ENCODE measurements at regions of chr17 and their contacts with region 1.

Region 1: GRCh38 chr17:35214631-35215273 is 20.6 kb upstream of the SLC35G3 start:
- DNase-seq: peak; percentile 41
- H3K4me3 Mint-ChIP-seq: peak overlapping the region; percentile 67
- H3K27ac Mint-ChIP-seq: peak overlapping the region; percentile 95
- H3K4me1 Mint-ChIP-seq: peaks cover 79% of the 10 kb centered on the region
- H3K27me3 Mint-ChIP-seq: no peaks in the 10 kb centered on the region

Region 2: DNA sequence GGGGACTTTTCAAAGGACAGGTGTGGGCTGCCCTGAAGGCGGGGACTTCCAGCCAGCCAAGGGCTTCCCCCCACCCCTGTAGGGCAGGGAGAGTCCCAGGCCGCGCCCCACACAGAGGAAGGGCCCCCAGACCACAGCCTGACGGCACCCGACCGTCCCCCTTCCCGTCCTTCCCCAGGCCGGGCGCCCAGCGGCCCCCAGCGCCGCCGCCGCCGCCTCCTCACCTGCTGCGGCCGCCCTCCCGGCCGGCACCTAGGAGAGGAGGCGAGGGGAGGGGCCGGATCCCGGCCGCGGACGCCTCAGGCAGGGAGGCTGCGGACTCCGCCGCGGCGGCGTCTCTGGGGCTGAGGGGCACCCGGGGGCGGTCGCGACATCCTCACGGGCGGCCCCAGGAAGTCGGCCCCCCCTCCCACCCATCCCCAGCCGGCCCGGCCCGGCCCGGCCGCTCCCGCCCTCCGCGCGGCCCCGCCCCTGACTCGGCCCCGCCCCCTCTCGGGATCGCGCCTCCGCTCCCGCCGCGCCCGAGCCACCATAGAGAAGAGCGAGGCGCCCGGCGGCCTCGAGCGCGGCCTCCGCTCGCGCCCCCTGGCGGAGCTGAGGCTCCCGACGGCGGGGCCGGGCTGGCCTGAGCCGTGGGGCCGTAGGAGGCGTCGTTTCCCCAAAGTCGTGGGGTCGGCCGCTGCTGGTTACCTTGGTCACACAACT is 125.7 kb before region 1 on chr17:
- intact Hi-C with region 1: loop called (anchors 10 kb)
- DNase-seq: peak; percentile 84
- H3K4me3 Mint-ChIP-seq: peak overlapping the region; percentile 88
- H3K27ac Mint-ChIP-seq: peak overlapping the region; percentile 92
- H3K4me1 Mint-ChIP-seq: peaks cover 41% of the 10 kb centered on the region
- H3K27me3 Mint-ChIP-seq: no peaks in the 10 kb centered on the region

Region 3: DNA sequence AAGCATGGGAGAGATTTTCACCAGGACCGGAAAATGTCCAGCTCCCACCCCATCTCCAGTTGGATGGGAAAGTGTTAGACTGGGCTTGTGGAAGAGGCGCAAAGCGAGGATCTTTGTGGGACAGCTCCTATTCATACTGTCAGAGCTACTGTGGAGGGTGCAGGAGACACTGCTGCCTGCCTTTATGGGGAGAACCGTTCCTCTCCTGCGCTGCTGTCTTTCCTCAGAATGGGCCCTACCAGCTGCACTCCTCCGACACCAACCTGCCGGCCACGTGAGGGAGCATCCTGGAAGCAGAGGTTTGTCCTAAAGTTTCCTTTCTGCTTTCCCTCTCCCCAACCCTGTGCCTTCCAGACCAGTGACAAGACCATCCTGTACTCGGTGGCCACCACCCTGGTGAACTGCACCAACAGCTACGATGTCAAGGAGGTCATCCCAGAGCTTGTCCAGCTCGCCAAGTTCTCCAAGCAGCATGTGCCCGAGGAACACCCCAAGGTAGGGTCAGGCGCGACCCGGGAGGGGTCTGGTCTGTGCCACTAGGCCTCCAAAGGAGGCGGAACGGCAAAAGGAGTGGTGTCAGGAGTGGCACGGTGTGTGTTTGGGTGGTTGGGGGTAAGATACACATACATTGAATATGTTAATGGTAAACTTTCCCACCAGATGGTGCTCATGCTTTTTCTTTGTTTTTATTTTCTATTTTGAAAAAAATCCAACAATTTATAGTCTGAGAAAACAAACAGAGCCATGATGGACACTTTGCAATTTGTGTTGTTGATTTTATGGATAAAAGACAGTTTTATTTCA is 43.6 kb before region 1 on chr17:
- intact Hi-C with region 1: loop called (anchors 5 kb)
- DNase-seq: no peak
- H3K4me3 Mint-ChIP-seq: no peak overlapping the region
- H3K27ac Mint-ChIP-seq: no peak overlapping the region
- H3K4me1 Mint-ChIP-seq: peaks cover 28% of the 10 kb centered on the region
- H3K27me3 Mint-ChIP-seq: no peaks in the 10 kb centered on the region

Region 4: DNA sequence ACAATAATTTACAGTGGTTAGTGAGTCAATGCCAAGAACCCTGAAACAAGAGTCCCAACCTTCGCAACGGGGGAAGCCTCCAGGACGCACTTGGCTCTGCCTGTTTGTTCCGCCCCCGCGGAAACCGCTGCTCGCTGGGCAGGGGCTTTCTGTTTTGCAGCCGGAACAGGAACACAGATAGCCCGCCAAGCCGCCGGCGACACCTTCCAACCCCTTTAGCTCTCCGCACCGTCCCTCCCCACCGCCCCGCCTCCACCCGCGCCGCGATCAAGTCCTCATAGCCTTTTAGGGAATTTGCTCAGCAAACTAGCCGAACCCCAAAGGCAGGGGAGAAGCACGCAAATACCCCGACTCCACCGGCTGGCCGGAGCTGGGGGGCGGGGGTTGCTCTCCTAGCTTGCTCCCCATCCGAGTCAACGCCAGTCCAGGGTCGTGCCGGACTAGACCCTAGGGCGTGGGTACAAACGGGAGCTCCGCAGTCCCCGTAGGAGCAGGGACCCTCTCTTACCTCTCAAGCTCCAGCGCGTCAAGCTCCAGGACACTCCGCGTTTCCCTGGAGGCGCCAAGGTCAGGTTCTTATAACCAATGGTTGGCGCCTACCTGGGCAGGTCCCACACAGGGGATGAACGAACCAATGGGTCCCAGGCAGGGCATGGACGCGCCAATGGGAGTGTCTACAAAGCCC is 233.6 kb after region 1 on chr17 and contains the start of gene SLFN13:
- intact Hi-C with region 1: loop called (anchors 5 kb)
- DNase-seq: peak; percentile 83
- H3K4me3 Mint-ChIP-seq: peak within 1 kb of the TSS; percentile 65
- H3K27ac Mint-ChIP-seq: peak within 1 kb of the TSS; percentile 79
- H3K4me1 Mint-ChIP-seq: peaks cover 16% of the 10 kb centered on the region
- H3K27me3 Mint-ChIP-seq: no peaks in the 10 kb centered on the region
- total RNA-seq, gene SLFN13: 41.9 and 42.6 TPM in 2 replicates

Region 5: GRCh38 chr17:35529866-35530265 is 315.1 kb after region 1 on chr17:
- intact Hi-C with region 1: loop called (anchors 2 kb)
- DNase-seq: no peak
- H3K4me3 Mint-ChIP-seq: peak overlapping the region; percentile 34
- H3K27ac Mint-ChIP-seq: no peak overlapping the region
- H3K4me1 Mint-ChIP-seq: peaks cover 61% of the 10 kb centered on the region
- H3K27me3 Mint-ChIP-seq: no peaks in the 10 kb centered on the region

Measured in activated T-helper 2 cell treated with anti-CD3 and anti-CD28 coated beads, Interferon-gamma antibody, Interleukin-2, Interleukin-4, amounts not matched to agents 10 μg/mL and 5 μg/mL and 100 μg/mL, durations not matched to agents 14 hours and 24 hours and 36 hours (primary cell).